Esophagus squamous epithelium (tissue), 5 donors: ENCODE measurements at regions of chr16 and their contacts with region 1.

Region 1: GRCh38 chr16:70679666-70680494 is 6.0 kb downstream of the MTSS2 start:
- DNase-seq: no peak
- H3K4me3 ChIP-seq: peak overlapping the region in 1 of 4 donors; percentile 21
- H3K27ac ChIP-seq: peak overlapping the region in 3 of 4 donors; percentile 76 to 95 (median 88)
- H3K4me1 ChIP-seq: peaks cover 37 to 63% (median 48%) of the 10 kb centered on the region in 3 donors
- H3K27me3 ChIP-seq: no peaks in the 10 kb centered on the region
- CTCF ChIP-seq: peak in 4 of 6 experiments; percentile 37 to 60 (median 58)
- POLR2A ChIP-seq: no peak

Region 2: DNA sequence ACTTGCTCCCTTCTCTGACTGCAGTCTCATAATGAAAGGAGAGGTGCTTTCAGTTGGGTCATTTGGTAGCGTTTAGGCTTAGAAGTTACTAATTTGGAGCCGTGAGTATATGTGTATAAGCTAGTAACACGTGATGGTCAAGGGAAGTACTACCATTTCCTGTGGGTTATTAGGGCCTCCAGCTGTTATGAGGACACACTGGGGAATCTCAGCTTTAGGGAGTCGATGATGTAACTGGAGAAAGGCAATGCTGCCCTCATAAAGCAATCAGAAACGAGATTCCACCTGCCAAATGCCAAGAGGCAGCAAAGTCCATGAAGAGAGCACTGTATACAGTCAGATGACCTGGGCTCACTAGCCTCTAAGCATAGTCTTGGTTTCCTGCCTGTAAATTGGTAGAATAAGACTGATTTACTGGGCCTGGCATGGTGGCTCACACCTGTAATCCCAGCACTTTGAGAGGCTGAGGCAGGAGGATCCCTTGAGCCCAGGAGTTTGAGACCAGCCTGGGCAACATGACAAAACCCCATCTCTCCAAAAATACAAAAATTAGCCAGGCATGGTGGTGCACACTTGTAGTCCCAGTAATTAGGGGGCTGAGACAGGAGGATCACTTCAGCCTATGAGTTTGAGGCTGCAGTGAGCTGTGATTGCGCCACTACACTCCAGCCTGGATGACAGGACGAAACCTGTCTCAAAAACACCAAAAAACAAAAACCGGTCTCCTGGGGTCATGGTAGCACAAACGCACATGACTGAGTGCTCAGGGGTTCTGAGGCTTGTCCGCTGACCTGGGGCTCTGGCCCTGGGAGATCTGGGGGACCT is 103.2 kb before region 1 on chr16:
- intact Hi-C with region 1: no loop called
- DNase-seq: no peak
- H3K4me3 ChIP-seq: no peak overlapping the region
- H3K27ac ChIP-seq: peak overlapping the region; percentile 19 to 67 (median 38)
- H3K4me1 ChIP-seq: peaks cover 0 to 88% (median 55%) of the 10 kb centered on the region in 3 donors
- H3K27me3 ChIP-seq: no peaks in the 10 kb centered on the region
- CTCF ChIP-seq: no peak
- POLR2A ChIP-seq: no peak

Region 3: GRCh38 chr16:70770626-70771552 is 91.0 kb after region 1 on chr16:
- intact Hi-C with region 1: loop called (anchors 5 kb)
- DNase-seq: no peak
- H3K4me3 ChIP-seq: no peak overlapping the region
- H3K27ac ChIP-seq: no peak overlapping the region
- H3K4me1 ChIP-seq: peaks cover 5 to 41% (median 20%) of the 10 kb centered on the region in 3 donors
- H3K27me3 ChIP-seq: no peaks in the 10 kb centered on the region
- CTCF ChIP-seq: peak; percentile 66 to 95 (median 94)
- POLR2A ChIP-seq: no peak